ENCODE measurements at regions of chr1 and their contacts with region 1.

Region 1: DNA sequence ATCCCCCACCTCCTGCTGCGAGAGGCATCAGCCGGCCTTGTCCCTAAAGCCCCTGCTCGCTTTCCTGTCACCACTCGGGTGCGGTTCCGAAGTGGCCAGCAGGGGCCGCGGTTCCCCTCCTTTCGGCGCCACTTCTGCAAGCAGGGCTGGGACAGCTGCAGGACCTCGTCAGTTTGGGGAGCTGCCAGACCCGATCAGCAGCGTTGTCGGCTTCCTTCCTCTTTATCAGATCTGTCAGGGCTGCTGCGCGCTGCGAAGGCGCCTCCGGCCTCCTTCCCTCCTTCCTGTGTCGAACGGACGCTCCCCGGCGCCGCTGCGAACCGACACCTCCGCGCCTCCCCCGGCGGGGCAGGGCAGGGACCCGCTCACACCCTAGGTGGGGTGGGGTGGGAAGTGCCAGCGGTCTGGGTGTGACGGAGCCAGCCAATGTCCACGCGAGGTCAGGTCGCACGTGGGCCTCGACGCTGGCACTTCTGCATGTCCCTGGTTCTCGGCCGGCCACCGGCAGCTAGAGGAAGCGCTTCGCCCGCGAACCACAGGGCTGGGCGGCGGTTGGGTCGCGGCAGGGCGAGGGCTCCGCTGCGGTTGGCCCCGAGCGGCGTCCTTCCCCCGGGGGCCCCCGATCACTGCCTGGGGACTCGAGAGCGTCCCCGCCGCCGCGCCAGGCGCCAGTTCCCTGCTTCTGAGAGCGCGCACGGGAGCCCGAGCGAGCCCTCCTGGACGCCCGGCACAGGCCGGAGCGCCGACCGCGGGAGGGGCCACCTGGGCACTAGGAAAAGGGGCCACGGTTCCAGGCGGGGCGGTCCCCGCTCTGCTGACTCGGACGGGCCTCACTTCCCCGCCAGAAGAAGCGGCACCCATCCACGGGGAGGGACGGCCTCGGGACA is 81.8 kb downstream of the RUNX3 start:
- DNase-seq: peak; percentile 68
- H3K27ac ChIP-seq: peak overlapping the region; percentile 59
- CTCF ChIP-seq: peak; percentile 90

Region 2: GRCh38 chr1:25100151-25100833 is 252.1 kb after region 1 on chr1:
- CTCF ChIA-PET with region 1: interaction called, 24 read pairs
- POLR2A ChIA-PET with region 1: no interaction called
- DNase-seq: no peak
- H3K27ac ChIP-seq: no peak overlapping the region
- CTCF ChIP-seq: no peak